ENCODE measurements at regions of chr20 and their contacts with region 1.

Region 1: DNA sequence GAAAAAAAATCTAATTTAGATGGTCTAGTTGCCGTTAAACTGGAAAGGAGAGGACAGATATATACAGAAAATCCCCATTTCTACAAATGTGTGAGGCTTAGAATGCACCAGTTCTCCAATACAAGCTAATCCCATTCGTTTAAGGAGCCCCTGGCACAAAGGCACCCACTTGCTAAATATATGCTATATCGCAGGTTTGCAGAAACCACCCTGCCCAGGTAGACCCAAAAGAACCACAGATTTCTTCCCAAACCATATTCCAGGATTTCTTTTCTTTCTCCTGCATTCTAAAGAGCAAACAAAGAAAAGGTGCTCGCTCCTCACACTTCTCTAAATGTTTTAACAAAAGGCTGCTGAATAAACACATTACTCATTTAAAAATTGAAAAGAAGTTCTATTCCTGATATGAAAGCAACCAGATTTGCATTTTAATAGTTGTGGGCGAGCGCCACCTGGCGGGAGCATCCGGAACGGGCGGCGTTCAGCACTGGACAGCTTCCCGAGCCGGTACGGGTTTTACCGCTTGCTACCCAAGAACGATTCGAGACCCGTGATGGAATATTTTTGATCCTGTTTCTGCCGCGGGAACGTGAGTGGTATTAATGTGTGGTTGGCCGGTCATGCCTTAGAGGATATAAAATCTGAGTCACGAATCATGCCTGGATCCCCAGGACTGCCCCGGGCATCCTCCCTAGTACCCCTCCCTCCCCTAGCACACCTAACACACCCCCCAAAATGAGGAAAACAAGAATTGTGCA is 2.1 kb downstream of the PTPRT start:
- DNase-seq: peak; percentile 9
- H3K4me3 ChIP-seq: no peak overlapping the region
- CTCF ChIP-seq: peak; percentile 82

Region 2: DNA sequence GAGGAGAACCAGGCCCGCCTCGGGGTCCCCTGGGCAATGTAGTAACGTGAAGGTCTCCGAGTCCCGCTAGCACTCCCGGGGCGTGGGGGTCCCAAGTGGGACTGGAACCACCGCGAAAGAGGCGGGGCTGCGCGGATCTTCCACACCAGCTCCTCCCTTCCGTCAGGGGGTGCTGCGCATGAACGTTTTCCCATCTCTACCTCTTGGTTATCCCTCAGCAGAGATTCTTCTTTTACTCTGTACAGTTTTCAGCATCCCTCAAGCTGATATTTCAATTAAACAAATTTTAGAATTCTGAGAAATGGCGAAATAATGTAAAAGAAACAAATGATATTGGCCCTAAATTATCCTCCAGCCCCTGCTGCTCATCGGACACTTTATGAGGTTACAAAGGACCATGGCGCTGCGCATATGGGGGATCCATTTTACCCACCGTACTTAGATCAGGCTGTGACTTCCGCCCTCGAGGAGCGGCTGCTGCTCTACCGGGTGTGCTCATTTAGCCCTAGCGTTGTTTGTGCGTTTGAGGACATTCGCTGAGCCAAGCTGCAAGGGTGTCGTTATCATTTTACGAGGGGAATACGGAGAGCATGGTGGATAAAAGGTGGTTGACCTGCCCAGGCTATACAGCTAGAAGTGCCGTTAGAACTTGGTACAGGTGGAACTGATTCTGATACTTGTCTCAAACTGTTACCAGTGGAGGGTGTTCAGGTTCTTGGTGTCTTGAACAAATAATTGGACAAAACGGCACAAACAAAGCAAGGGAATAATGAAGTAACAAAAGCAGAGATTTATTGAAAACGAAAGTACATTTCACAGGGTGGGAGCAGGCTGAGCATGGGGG is 1494.3 kb before region 1 on chr20:
- CTCF ChIA-PET with region 1: interaction called, 14 read pairs
- POLR2A ChIA-PET with region 1: no interaction called
- DNase-seq: peak; percentile 29
- H3K4me3 ChIP-seq: peak overlapping the region; percentile 80
- CTCF ChIP-seq: peak; percentile 36